Ovary (tissue), 10 donors: ENCODE measurements at regions of chr2 and their contacts with region 1.

Region 1: GRCh38 chr2:66429071-66429477 is 5.9 kb upstream of the MEIS1 start:
- DNase-seq: peak in 2 of 5 donors; percentile 22 to 35
- H3K4me3 ChIP-seq: no peak overlapping the region
- H3K27ac ChIP-seq: no peak overlapping the region
- H3K4me1 ChIP-seq: peaks cover 6% of the 10 kb centered on the region
- H3K27me3 ChIP-seq: no peaks in the 10 kb centered on the region
- CTCF ChIP-seq: peak; percentile 72 to 90 (median 86)
- EP300 ChIP-seq: no peak
- POLR2A ChIP-seq: no peak

Region 2: DNA sequence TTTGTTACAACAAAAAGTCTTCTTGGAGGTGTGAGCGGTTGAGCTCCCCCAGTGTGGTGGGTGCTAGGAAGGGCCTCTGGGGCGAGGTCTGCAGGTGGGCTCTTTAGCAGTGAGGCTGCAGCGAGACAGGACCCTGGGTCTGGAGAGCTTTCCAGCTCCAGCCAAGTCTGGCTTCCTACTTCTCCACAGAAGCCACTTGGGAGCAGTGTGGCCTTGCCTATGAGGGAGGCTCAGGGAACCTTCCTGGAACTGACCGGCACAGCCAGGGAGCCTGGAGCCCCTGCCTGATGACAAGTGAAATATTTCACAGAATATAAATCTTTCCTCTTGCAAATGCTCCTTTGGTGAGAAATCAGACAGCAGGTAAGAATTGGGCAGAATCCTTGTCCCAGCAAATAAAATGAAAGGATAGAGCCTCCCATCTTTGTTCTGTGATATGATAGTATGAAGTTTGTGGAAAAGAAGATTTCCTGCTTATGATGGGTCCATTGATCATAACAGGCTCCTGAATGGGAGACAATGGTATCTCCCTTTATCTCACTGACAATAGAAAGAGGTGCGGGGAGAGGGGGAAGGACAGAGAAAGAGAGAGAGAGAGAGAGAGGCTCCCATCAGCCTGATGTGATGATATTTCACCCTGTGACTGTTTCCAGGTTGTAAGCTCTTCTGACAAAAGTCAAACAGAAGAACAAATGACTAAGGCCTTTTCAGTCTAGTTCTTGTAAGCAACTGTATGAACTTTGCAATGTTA is 706.9 kb before region 1 on chr2:
- intact Hi-C with region 1: loop called in 2 of 4 experiments (anchors 10 kb)
- DNase-seq: peak; percentile 55 to 73 (median 61)
- H3K4me3 ChIP-seq: no peak overlapping the region
- H3K27ac ChIP-seq: no peak overlapping the region
- H3K4me1 ChIP-seq: no peaks in the 10 kb centered on the region
- H3K27me3 ChIP-seq: no peaks in the 10 kb centered on the region
- CTCF ChIP-seq: peak in 2 of 3 donors; percentile 29 to 36
- EP300 ChIP-seq: no peak
- POLR2A ChIP-seq: no peak

Region 3: DNA sequence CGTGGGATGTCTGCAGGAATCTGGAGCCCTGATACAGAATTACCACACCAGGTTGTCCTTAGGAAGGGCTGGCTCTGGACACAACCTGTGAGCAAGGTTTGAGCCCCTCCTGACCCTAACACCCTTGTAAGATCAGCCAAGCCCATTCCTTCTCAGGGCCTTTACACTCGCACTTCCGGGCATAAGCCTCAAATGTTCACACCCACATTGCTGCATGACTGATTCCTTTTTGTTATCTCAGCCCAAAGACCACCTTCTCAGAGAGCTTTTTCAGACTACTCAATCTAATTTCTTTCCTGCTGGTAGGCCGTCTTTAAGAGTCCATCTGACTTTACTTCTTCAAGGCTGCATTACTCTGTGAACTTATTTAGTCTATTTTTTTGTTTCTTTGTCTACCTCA is 532.6 kb before region 1 on chr2:
- intact Hi-C with region 1: no loop called
- DNase-seq: no peak
- H3K4me3 ChIP-seq: no peak overlapping the region
- H3K27ac ChIP-seq: no peak overlapping the region
- H3K4me1 ChIP-seq: no peaks in the 10 kb centered on the region
- H3K27me3 ChIP-seq: no peaks in the 10 kb centered on the region
- CTCF ChIP-seq: no peak
- EP300 ChIP-seq: no peak
- POLR2A ChIP-seq: no peak

Region 4: DNA sequence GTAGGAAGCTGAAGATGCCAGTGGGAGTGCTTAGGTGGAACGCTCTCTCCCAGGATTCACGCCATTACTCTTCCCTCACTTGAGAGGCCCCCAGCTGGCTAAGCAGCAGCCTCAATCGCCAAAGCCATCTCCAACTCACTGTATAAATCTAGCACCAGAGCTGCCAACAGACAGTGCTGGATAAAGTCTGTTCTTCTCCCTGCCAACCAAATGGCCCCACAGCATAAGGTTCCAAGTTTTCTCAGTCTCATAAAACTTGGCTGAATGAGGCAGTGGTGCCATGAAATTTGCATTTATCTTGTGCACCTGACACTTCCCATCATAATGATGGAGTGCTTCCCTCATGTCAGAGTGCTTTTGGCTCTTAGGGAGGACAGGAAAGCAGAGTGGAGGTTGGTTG is 539.9 kb after region 1 on chr2:
- intact Hi-C with region 1: no loop called
- DNase-seq: no peak
- H3K4me3 ChIP-seq: no peak overlapping the region
- H3K27ac ChIP-seq: no peak overlapping the region
- H3K4me1 ChIP-seq: no peaks in the 10 kb centered on the region
- H3K27me3 ChIP-seq: no peaks in the 10 kb centered on the region
- CTCF ChIP-seq: no peak
- EP300 ChIP-seq: no peak
- POLR2A ChIP-seq: no peak

Region 5: GRCh38 chr2:67476809-67477790 is 1048.0 kb after region 1 on chr2:
- intact Hi-C with region 1: loop called in 1 of 4 experiments (anchors 5 kb)
- DNase-seq: peak in 1 of 5 donors; percentile 15
- H3K4me3 ChIP-seq: no peak overlapping the region
- H3K27ac ChIP-seq: no peak overlapping the region
- H3K4me1 ChIP-seq: no peaks in the 10 kb centered on the region
- H3K27me3 ChIP-seq: no peaks in the 10 kb centered on the region
- CTCF ChIP-seq: peak in 1 of 3 donors; percentile 37
- EP300 ChIP-seq: no peak
- POLR2A ChIP-seq: no peak

Region 6: GRCh38 chr2:67650291-67651133 is 1221.4 kb after region 1 on chr2:
- intact Hi-C with region 1: loop called in 3 of 4 experiments (anchors 5 to 10 kb)
- DNase-seq: peak; percentile 77 to 88 (median 84)
- H3K4me3 ChIP-seq: no peak overlapping the region
- H3K27ac ChIP-seq: no peak overlapping the region
- H3K4me1 ChIP-seq: peaks cover 10% of the 10 kb centered on the region
- H3K27me3 ChIP-seq: no peaks in the 10 kb centered on the region
- CTCF ChIP-seq: peak; percentile 32 to 70 (median 43)
- EP300 ChIP-seq: no peak
- POLR2A ChIP-seq: no peak